CD8-positive, alpha-beta T cell (primary cell): ENCODE measurements at regions of chr4 and their contacts with region 1.

Region 1: DNA sequence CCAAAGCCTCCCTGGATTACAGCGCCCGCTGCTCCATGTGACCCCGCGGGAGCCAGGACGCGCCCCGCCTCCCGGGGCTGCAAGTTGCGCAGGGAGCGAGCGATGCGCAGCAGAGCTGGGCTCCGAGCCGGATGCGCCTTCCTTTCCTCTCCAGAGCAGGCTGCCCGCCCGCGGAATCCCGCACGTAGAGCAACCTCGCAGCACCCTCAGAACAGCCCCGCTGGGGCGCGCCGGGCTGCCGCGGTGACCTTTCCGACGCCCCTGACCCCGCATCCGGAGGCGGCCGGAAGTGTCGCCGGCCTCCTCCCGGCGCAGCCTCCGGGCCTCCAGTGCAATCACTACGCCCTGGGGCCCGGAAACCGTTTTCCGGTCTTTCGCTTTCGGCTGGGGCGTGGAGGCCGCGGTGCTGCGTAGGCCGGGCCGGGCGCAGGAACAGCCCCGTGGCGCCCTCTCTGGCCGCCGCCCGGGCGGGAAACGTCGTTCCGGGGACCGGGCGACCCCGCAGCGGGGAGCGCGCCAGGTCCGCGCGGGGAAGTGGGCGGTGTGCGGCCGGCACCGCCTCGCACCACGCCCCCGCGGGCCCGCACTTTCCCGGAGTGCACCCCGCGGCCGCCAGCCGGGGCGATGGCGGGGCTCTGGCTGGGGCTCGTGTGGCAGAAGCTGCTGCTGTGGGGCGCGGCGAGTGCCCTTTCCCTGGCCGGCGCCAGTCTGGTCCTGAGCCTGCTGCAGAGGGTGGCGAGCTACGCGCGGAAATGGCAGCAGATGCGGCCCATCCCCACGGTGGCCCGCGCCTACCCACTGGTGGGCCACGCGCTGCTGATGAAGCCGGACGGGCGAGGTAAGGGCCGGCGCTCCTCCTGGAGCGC is at the start of gene CYP4V2:
- DNase-seq: peak; percentile 64 to 92 (median 85)
- ATAC-seq: peak; percentile 80
- H3K4me3 ChIP-seq: peak within 1 kb of the TSS; percentile 73 to 85
- H3K4me3 Mint-ChIP-seq: peak within 1 kb of the TSS; percentile 90
- H3K27ac ChIP-seq: peak within 1 kb of the TSS; percentile 89 to 91
- H3K27ac Mint-ChIP-seq: peak within 1 kb of the TSS; percentile 98
- H3K4me1 ChIP-seq: peaks cover 25% of the 10 kb centered on the region
- H3K4me1 Mint-ChIP-seq: peaks cover 57% of the 10 kb centered on the region
- H3K27me3 ChIP-seq: no peaks in the 10 kb centered on the region
- H3K27me3 Mint-ChIP-seq: no peaks in the 10 kb centered on the region
- CTCF ChIP-seq: no peak
- total RNA-seq, gene CYP4V2: 7.9 to 9.9 TPM

Region 2: DNA sequence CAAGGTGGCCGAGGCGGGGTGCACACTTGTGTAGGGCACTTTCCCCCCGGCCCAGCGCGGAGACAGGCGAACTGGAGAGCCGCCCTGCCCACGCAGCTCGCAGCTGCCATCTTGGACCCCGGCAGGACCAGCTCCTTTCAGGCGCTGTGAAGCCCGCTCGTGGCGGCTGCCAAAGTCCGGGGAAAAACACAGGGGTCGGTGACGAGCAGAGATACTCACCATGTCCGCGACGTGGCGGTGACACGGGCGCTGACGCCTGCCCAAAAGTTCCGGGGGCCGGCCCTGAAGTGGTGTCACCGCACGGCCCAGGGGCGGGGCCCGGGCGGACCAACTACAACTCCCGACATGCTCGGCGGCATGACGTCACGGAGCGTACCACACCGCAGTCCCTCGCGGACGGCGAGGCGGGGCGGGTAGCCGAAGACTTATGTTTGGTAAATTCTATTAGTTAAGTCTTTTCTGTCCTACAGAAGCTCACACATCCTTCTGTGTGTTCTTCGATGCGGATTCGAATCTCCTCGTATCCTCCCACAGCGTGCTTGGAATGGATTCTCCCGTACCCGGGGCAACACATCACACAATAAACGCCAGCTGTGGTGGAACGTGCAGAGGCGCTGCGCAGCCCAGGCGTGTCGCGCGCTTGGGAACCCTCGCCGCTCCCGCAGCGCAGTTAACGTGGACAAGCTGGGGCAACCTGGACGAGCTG is 765.6 kb before region 1 on chr4 and contains the start of gene UFSP2:
- CTCF ChIA-PET with region 1: no interaction called
- POLR2A ChIA-PET with region 1: interaction called, 3 read pairs
- intact Hi-C with region 1: loop called in 1 of 2 experiments (anchors 10 kb)
- DNase-seq: peak; percentile 75 to 97 (median 89)
- ATAC-seq: peak; percentile 86
- H3K4me3 ChIP-seq: peak within 1 kb of the TSS; percentile 87 to 90
- H3K4me3 Mint-ChIP-seq: peak within 1 kb of the TSS; percentile 83
- H3K27ac ChIP-seq: peak within 1 kb of the TSS; percentile 97 to 99
- H3K27ac Mint-ChIP-seq: peak within 1 kb of the TSS; percentile 100
- H3K4me1 ChIP-seq: peaks cover 18% of the 10 kb centered on the region
- H3K4me1 Mint-ChIP-seq: peaks cover 36% of the 10 kb centered on the region
- H3K27me3 ChIP-seq: no peaks in the 10 kb centered on the region
- H3K27me3 Mint-ChIP-seq: peaks cover 5% of the 10 kb centered on the region
- CTCF ChIP-seq: no peak
- total RNA-seq, gene UFSP2: 13.4 to 17.4 TPM

Region 3: GRCh38 chr4:186144956-186145569 is 46.4 kb before region 1 on chr4:
- CTCF ChIA-PET with region 1: no interaction called
- POLR2A ChIA-PET with region 1: no interaction called
- intact Hi-C with region 1: loop called in 1 of 2 experiments (anchors 1 kb)
- DNase-seq: no peak
- ATAC-seq: no peak
- H3K4me3 ChIP-seq: peak overlapping the region in 1 of 2 experiments; percentile 22
- H3K4me3 Mint-ChIP-seq: peak overlapping the region; percentile 69
- H3K27ac ChIP-seq: no peak overlapping the region
- H3K27ac Mint-ChIP-seq: no peak overlapping the region
- H3K4me1 ChIP-seq: peaks cover 6% of the 10 kb centered on the region
- H3K4me1 Mint-ChIP-seq: peaks cover 9% of the 10 kb centered on the region
- H3K27me3 ChIP-seq: peaks cover 14 to 16% of the 10 kb centered on the region in 2 experiments
- H3K27me3 Mint-ChIP-seq: peaks cover 43% of the 10 kb centered on the region
- CTCF ChIP-seq: no peak

Region 4: GRCh38 chr4:186161138-186161537 is 30.3 kb before region 1 on chr4:
- CTCF ChIA-PET with region 1: no interaction called
- POLR2A ChIA-PET with region 1: interaction called, 16 read pairs
- intact Hi-C with region 1: no loop called
- DNase-seq: peak in 2 of 9 experiments; percentile 20 to 27
- ATAC-seq: peak; percentile 51
- H3K4me3 ChIP-seq: no peak overlapping the region
- H3K4me3 Mint-ChIP-seq: peak overlapping the region; percentile 66
- H3K27ac ChIP-seq: no peak overlapping the region
- H3K27ac Mint-ChIP-seq: peak overlapping the region; percentile 16
- H3K4me1 ChIP-seq: no peaks in the 10 kb centered on the region
- H3K4me1 Mint-ChIP-seq: peaks cover 5% of the 10 kb centered on the region
- H3K27me3 ChIP-seq: peaks cover 0 to 8% of the 10 kb centered on the region in 2 experiments
- H3K27me3 Mint-ChIP-seq: peaks cover 5% of the 10 kb centered on the region
- CTCF ChIP-seq: no peak

Region 5: GRCh38 chr4:186201535-186202230 is 10.2 kb after region 1 on chr4:
- CTCF ChIA-PET with region 1: interaction called, 8 read pairs
- POLR2A ChIA-PET with region 1: interaction called, 18 read pairs
- intact Hi-C with region 1: loop called in 1 of 2 experiments (anchors 1 kb)
- DNase-seq: peak; percentile 14 to 76 (median 63)
- ATAC-seq: peak; percentile 91
- H3K4me3 ChIP-seq: no peak overlapping the region
- H3K4me3 Mint-ChIP-seq: peak overlapping the region; percentile 10
- H3K27ac ChIP-seq: no peak overlapping the region
- H3K27ac Mint-ChIP-seq: peak overlapping the region; percentile 73
- H3K4me1 ChIP-seq: no peaks in the 10 kb centered on the region
- H3K4me1 Mint-ChIP-seq: peaks cover 16% of the 10 kb centered on the region
- H3K27me3 ChIP-seq: no peaks in the 10 kb centered on the region
- H3K27me3 Mint-ChIP-seq: no peaks in the 10 kb centered on the region
- CTCF ChIP-seq: peak; percentile 76

Region 6: DNA sequence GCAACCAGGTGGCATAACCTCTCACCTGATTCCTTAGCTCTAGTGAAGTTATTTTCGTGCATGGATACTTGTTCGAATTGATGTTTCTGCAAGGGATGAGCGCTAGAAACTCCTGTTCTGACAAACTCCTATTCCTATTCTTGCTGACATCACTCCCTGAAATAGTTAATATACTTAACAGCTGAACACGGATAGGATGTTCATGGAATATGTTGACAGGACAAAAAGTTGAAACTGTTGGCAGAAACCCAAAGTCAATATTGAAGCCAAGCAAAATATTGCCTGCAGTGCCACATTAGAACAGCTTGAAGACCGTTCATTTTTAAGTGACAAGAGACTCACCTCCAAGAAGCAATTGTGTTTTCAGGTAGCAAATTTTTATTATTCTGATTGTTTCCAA is 35.8 kb after region 1 on chr4 and contains the start of gene KLKB1:
- CTCF ChIA-PET with region 1: no interaction called
- POLR2A ChIA-PET with region 1: no interaction called
- intact Hi-C with region 1: no loop called
- DNase-seq: no peak
- ATAC-seq: no peak
- H3K4me3 ChIP-seq: no peak within 1 kb of the TSS
- H3K4me3 Mint-ChIP-seq: no peak within 1 kb of the TSS
- H3K27ac ChIP-seq: no peak within 1 kb of the TSS
- H3K27ac Mint-ChIP-seq: no peak within 1 kb of the TSS
- H3K4me1 ChIP-seq: no peaks in the 10 kb centered on the region
- H3K4me1 Mint-ChIP-seq: no peaks in the 10 kb centered on the region
- H3K27me3 ChIP-seq: no peaks in the 10 kb centered on the region
- H3K27me3 Mint-ChIP-seq: no peaks in the 10 kb centered on the region
- CTCF ChIP-seq: no peak
- total RNA-seq, gene KLKB1: 0.25 to 0.35 TPM

Region 7: DNA sequence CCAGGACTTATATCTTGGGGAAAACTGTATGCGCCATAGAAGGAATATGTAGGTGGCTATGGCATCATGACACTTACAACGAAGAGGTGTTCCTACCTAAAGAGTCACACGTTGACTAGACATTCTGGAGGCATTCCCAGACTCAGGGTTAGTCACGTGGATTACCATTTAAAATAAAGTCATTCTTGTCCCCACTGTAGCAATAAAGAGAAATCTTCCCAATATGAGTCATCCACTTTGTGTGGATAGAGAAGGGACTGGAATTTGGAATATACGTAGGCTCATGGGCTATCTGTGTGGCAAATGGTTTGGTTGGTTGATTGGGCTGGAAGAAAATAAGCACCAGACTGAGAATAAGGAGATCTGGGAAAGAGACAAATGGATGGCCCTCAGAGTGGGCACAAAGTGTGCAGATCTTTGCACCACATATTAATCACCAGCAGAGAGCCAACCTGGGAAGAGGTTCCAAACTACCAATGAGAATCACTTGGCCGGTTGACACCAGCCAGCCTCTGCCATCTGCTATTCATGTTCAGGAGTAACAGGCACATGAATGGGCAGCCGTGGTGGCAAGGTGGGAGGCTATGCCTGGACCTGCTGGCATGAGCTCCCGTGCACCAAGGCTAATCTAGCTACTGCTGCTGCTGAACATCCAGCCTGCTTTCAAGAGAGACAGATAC is 323.0 kb after region 1 on chr4:
- CTCF ChIA-PET with region 1: no interaction called
- POLR2A ChIA-PET with region 1: no interaction called
- intact Hi-C with region 1: no loop called
- DNase-seq: no peak
- ATAC-seq: no peak
- H3K4me3 ChIP-seq: no peak overlapping the region
- H3K4me3 Mint-ChIP-seq: no peak overlapping the region
- H3K27ac ChIP-seq: no peak overlapping the region
- H3K27ac Mint-ChIP-seq: no peak overlapping the region
- H3K4me1 ChIP-seq: no peaks in the 10 kb centered on the region
- H3K4me1 Mint-ChIP-seq: no peaks in the 10 kb centered on the region
- H3K27me3 ChIP-seq: no peaks in the 10 kb centered on the region
- H3K27me3 Mint-ChIP-seq: no peaks in the 10 kb centered on the region
- CTCF ChIP-seq: no peak